HepG2 (cell line): ENCODE measurements at regions of chr7 and their contacts with region 1.

Region 1: DNA sequence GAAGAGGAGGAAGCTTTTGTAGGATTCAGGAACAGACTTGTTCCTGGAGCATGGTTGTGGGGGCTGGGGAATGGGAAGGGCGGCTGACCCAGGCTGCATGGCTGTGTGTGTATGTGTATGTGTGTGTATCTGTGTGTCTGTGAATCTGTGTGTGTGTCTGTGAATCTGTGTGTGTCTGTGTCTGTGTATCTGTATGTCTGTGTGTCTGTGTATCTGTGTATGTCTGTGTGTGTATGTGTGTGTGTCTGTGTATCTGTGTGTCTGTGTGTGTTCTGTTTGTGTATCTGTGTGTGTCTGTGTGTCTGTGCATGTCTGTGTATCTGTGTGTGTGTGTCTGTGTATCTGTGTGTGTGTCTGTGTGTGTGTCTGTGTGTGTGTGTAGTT is 6.6 kb upstream of the STX1A start:
- DNase-seq: no peak
- ATAC-seq: peak; percentile 56
- H3K4me3 ChIP-seq: no peak overlapping the region
- H3K27ac ChIP-seq: no peak overlapping the region
- H3K4me1 ChIP-seq: peaks cover 10% of the 10 kb centered on the region; the same call in 1 of the 2 replicates
- H3K27me3 ChIP-seq: no peaks in the 10 kb centered on the region; a peak in 2 of 5 replicates
- CTCF ChIP-seq: no peak
- EP300 ChIP-seq: no peak
- POLR2A ChIP-seq: no peak
- RAD21 ChIP-seq: no peak

Region 2: GRCh38 chr7:73606801-73607691 is 119.0 kb before region 1 on chr7:
- CTCF ChIA-PET with region 1: interaction called, 14 read pairs
- POLR2A ChIA-PET with region 1: interaction called, 7 read pairs
- in situ Hi-C with region 1: no loop called
- intact Hi-C with region 1: loop called (anchors 5 kb)
- DNase-seq: peak; percentile 33
- ATAC-seq: peak; percentile 40
- H3K4me3 ChIP-seq: no peak overlapping the region
- H3K27ac ChIP-seq: no peak overlapping the region
- H3K4me1 ChIP-seq: peaks cover 42% of the 10 kb centered on the region
- H3K27me3 ChIP-seq: no peaks in the 10 kb centered on the region
- CTCF ChIP-seq: peak; percentile 91
- EP300 ChIP-seq: no peak
- POLR2A ChIP-seq: peak in 1 of 2 experiments; percentile 25; a peak in 2 of 4 replicates
- RAD21 ChIP-seq: peak; percentile 88

Region 3: GRCh38 chr7:73612598-73613269 is 113.3 kb before region 1 on chr7:
- CTCF ChIA-PET with region 1: interaction called, 14 read pairs
- POLR2A ChIA-PET with region 1: interaction called, 7 read pairs
- in situ Hi-C with region 1: no loop called
- intact Hi-C with region 1: loop called (anchors 5 kb)
- DNase-seq: peak; percentile 99
- ATAC-seq: peak; percentile 80
- H3K4me3 ChIP-seq: peak overlapping the region in 1 of 3 experiments; percentile 6; a peak in 1 of 6 replicates
- H3K27ac ChIP-seq: peak overlapping the region; percentile 76
- H3K4me1 ChIP-seq: peaks cover 98% of the 10 kb centered on the region
- H3K27me3 ChIP-seq: no peaks in the 10 kb centered on the region
- CTCF ChIP-seq: peak; percentile 65
- EP300 ChIP-seq: peak; percentile 75 to 94; a peak in 3 of 4 replicates
- POLR2A ChIP-seq: peak; percentile 29 to 41; a peak in 2 of 4 replicates
- RAD21 ChIP-seq: peak; percentile 73

Region 4: DNA sequence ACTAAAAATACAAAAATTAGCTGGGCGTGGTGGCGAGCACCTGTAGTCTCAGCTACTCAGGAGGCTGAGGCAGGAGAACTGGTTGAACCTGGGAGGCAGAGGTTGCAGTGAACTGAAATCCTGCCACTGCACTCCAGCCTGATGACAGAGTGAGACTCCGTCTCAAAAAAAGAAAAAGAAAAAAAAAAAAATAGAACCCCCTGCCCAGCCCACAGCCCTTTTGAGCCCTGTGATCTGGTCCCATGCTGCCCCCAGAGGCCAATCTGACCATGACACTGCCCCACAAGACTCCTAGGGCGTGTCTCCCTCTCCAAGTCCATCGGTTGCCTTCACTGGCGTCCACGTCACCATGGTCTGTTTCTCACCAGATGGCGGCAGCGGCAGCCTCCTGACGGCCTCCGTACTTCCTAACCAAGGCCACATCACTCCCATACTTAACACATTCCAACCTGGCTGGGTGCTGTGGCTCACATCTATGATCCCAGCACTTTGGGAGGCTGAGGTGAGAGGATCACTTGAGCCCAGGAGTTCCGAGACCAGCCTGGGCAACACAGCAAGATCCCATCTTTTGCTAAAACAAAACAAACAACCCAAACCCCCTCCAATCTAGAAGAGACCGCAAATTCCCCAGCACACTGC is 24.6 kb before region 1 on chr7:
- CTCF ChIA-PET with region 1: interaction called, 15 read pairs
- POLR2A ChIA-PET with region 1: no interaction called
- in situ Hi-C with region 1: no loop called
- intact Hi-C with region 1: no loop called
- DNase-seq: peak; percentile 54
- ATAC-seq: peak; percentile 78
- H3K4me3 ChIP-seq: no peak overlapping the region
- H3K27ac ChIP-seq: no peak overlapping the region
- H3K4me1 ChIP-seq: peaks cover 15% of the 10 kb centered on the region
- H3K27me3 ChIP-seq: no peaks in the 10 kb centered on the region
- CTCF ChIP-seq: peak; percentile 71
- EP300 ChIP-seq: no peak
- POLR2A ChIP-seq: no peak
- RAD21 ChIP-seq: peak; percentile 38; the same call in 1 of the 2 replicates